Activated B cell treated with CpG ODN at 0.5 μM for 24 hours (primary cell): ENCODE measurements at regions of chr14 and their contacts with region 1.

Region 1: DNA sequence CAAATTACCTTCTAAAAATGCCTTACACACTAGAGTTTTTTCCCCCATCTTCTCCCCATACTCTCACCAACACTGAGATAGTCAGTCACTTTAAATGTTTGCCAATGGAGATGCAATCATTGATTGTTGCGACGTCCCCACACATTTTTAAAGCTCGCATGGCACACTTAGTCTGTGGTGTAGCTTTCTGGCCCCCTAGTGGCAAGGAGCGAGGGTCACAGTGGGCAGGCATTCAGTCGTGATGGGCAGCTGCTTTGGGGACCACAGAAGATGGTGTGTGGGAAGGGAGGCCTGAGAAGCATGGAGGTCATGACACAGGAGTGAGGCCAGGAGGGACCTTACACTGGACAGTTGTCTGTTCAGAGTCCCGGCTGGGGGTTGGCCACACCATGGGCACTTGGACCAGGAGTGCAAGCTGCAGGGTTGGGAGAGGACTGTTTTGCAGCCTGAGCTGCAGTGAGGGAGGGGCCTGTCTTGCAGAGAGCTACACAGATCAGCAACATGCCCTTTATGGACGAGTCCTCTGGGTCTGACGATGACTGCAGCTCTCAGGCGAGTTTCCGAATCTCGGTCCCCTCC is 28.7 kb downstream of the PIGH start:
- DNase-seq: peak; percentile 55
- ATAC-seq: peak; percentile 86
- H3K4me3 Mint-ChIP-seq: no peak overlapping the region
- H3K27ac Mint-ChIP-seq: no peak overlapping the region
- H3K4me1 Mint-ChIP-seq: peaks cover 3% of the 10 kb centered on the region
- H3K27me3 Mint-ChIP-seq: peaks cover 8% of the 10 kb centered on the region
- CTCF ChIP-seq: no peak

Region 2: DNA sequence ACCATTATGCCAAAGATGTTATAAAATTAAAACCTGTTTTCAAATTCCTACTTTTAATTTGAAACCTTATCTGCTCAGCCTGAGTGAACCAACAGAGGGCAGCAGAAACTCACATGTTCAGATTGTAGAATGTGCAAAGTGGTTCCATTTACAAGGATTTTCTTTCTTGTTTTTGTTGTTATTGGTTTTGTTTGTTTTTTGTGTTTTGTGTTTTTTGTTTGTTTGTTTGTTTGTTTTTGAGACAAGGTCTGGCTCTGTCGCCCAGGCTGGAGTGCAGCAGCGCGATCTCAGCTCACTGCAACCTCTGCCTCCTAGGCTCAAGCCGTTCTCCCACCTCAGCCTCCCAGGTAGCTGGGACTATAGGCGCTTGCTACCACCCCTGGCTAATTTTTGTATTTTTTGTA is 404.9 kb before region 1 on chr14:
- CTCF ChIA-PET with region 1: no interaction called
- POLR2A ChIA-PET with region 1: no interaction called
- intact Hi-C with region 1: loop called (anchors 10 kb)
- DNase-seq: no peak
- ATAC-seq: no peak
- H3K4me3 Mint-ChIP-seq: no peak overlapping the region
- H3K27ac Mint-ChIP-seq: no peak overlapping the region
- H3K4me1 Mint-ChIP-seq: no peaks in the 10 kb centered on the region
- H3K27me3 Mint-ChIP-seq: no peaks in the 10 kb centered on the region
- CTCF ChIP-seq: no peak

Region 3: GRCh38 chr14:67426983-67427606 is 144.3 kb before region 1 on chr14:
- CTCF ChIA-PET with region 1: interaction called, 339 read pairs
- POLR2A ChIA-PET with region 1: interaction called, 9 read pairs
- intact Hi-C with region 1: loop called (anchors 1 kb)
- DNase-seq: peak; percentile 61
- ATAC-seq: peak; percentile 98
- H3K4me3 Mint-ChIP-seq: no peak overlapping the region
- H3K27ac Mint-ChIP-seq: no peak overlapping the region
- H3K4me1 Mint-ChIP-seq: peaks cover 3% of the 10 kb centered on the region
- H3K27me3 Mint-ChIP-seq: peaks cover 11% of the 10 kb centered on the region
- CTCF ChIP-seq: peak; percentile 76

Region 4: GRCh38 chr14:67514650-67515385 is 56.5 kb before region 1 on chr14:
- CTCF ChIA-PET with region 1: interaction called, 13 read pairs
- POLR2A ChIA-PET with region 1: interaction called, 4 read pairs
- intact Hi-C with region 1: no loop called
- DNase-seq: peak; percentile 53
- ATAC-seq: peak; percentile 53
- H3K4me3 Mint-ChIP-seq: peak overlapping the region; percentile 88
- H3K27ac Mint-ChIP-seq: peak overlapping the region; percentile 85
- H3K4me1 Mint-ChIP-seq: peaks cover 41% of the 10 kb centered on the region
- H3K27me3 Mint-ChIP-seq: no peaks in the 10 kb centered on the region
- CTCF ChIP-seq: no peak

Region 5: DNA sequence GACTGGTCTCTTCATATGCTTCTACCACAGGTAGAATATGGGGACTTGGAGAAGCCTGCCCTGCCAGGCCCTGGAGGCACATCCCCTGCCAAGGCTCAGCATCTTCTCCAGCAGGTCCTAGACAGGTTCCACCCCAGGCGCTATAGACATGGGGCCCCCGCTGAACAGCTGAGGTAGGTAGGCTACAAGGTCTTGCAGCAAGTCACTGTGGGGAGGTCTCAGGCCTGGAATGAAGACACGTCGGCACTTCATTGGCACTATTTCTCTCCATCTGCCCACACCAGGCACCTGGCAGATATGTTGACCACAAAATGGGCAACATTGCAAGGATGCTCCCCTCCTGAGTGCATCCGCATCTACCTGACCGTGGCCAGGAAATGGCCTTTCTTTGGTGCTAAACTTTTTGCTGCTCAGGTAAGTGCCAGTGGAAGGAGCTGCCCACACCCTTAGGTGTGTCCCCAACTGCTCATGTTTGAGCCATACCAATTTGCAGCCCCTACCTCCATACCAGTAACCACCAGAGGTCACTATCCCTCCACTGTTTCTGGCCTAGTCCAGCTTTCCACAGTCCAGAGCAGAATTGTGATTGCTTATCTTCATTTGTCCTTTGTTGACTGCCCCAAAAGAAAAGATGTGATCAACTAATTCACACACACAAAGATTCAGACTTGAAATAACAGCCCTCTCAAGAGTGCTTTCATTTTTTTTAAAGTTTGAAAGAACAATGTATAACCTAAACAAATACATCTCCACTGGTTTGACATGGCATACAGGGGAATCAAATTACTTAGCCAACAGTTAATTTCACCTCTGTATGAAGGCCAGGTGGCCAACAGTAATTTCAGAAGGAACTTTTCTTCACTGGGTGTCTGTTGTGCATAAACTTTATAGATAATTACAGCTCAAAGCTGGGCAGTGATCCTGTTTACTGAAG is 12.6 kb after region 1 on chr14:
- CTCF ChIA-PET with region 1: interaction called, 11 read pairs
- POLR2A ChIA-PET with region 1: no interaction called
- intact Hi-C with region 1: no loop called
- DNase-seq: no peak
- ATAC-seq: peak; percentile 80
- H3K4me3 Mint-ChIP-seq: no peak overlapping the region
- H3K27ac Mint-ChIP-seq: no peak overlapping the region
- H3K4me1 Mint-ChIP-seq: peaks cover 5% of the 10 kb centered on the region
- H3K27me3 Mint-ChIP-seq: no peaks in the 10 kb centered on the region
- CTCF ChIP-seq: peak; percentile 46

Region 6: DNA sequence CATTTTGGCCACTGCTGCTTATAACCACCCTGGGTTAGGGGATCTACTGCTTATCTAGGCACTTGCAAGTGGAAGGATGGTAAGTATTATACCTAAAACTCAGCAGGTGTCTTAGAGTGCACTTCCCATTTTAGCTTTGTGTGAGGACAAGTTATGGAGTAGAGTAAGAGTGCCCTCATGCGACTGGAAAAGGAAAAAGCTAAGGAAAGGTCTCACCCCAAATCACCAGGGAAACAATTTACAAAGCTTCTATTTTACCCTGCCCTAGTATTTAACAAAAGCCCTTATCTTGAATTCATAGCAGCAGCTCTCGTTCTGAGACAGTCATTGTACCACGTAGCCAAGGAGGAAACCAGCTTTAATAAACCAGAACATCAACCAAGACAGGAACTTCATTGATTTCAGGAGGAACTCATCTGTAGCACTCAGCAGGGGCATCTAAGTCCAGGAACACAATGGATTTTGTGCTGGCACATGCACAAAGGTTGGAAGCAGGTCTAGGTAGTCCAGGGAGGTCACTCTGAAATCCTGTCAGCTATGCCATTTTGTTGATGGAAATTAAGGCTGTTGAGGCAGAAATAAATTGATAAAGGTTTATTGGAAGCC is 133.2 kb after region 1 on chr14:
- CTCF ChIA-PET with region 1: interaction called, 31 read pairs
- POLR2A ChIA-PET with region 1: no interaction called
- intact Hi-C with region 1: no loop called
- DNase-seq: no peak
- ATAC-seq: peak; percentile 81
- H3K4me3 Mint-ChIP-seq: no peak overlapping the region
- H3K27ac Mint-ChIP-seq: no peak overlapping the region
- H3K4me1 Mint-ChIP-seq: no peaks in the 10 kb centered on the region
- H3K27me3 Mint-ChIP-seq: no peaks in the 10 kb centered on the region
- CTCF ChIP-seq: no peak